BJ (cell line): ENCODE measurements at regions of chr4 and their contacts with region 1.

Region 1: DNA sequence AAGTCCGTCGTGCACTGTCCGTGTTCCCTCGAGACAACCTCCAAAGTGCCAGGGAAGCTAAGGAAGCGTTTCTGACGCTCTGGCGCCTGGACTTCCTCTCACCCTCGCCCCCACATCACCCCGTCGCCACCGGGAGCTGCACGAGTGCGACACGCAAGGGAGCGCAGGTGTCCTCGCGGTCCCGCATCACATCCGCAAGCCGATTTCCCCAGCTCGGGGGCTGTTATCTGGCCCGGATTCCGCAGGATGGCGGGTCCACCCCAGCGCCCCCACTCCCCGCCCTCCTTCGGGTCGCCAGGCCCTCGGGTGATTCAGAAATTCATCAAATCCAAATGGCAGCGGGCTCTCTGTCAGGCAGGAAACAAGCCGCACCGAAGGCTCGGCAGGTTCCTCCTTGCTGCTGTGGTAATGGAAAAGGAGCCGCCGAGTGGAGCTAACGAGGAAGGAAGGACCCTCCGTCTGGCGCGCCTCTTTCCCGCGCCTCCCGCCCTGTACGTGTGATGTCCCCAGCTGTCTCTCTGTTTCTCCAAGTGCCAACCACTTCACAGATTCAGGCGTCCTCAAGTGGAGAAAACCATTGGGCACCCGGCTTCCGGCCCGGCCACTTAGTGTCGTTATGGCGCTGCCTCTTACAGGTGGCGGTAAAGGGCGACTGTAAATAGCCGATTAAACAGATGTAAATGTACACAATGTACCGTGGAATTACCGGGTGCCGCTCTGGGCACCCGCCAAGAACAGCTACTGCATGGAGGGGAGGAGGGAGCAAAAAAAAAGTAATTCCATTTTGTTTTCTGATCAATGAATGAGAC is 932 bp upstream of the SETD7 start:
- DNase-seq: no peak
- H3K4me3 ChIP-seq: peak overlapping the region; percentile 90
- H3K27me3 ChIP-seq: peaks cover 19% of the 10 kb centered on the region
- CTCF ChIP-seq: no peak

Region 2: DNA sequence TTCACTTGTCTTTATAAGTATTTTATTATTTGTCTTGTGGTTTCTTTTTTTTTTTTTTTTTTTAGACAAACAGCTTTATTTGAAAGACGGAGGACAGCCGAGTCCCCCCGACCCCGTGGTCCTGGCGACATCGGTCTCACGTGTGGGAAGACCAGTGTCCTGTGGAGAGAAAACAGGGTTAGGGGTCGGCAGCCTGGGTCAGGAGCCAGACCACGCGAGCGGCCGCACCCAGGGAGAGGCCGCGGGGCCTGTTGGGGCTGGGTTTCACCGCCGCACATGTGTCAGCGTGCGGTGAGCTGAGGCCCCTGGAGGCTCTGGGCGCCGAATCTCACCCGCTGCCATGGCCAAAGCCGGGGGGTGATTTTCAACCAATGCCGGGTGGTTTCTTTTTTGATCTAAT is 120.8 kb before region 1 on chr4:
- CTCF ChIA-PET with region 1: interaction called, 3 read pairs
- POLR2A ChIA-PET with region 1: interaction called, 24 read pairs
- DNase-seq: no peak
- H3K4me3 ChIP-seq: no peak overlapping the region
- H3K27me3 ChIP-seq: no peaks in the 10 kb centered on the region
- CTCF ChIP-seq: no peak

Region 3: DNA sequence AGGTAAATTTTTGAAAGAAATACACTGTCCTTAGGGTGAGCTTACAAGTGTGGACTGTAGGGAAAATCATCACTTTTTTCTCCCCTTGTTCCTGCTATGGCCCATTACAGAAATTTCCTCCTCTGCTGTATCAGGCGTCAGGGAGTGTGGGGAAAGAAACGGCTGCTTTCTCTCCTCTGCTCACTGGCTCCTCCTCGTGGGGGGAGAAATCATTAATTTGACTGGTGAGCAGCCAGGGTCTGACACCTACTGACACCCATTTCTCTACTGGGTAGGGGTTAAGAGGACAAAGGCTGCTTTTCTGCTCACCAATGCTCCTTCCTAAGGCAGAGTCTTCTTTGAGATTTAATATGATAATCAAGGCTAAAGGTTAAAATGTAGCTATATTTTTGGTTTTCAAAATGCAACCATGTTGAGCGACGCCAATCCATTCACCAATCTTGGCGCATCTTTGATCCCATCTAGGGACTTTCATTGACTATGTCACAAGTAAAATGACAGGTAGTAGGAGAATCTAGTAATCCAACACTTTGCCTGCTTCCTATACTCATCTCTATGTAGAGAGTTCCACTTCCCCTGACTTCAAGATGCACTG is 26.0 kb before region 1 on chr4:
- CTCF ChIA-PET with region 1: no interaction called
- POLR2A ChIA-PET with region 1: interaction called, 10 read pairs
- DNase-seq: no peak
- H3K4me3 ChIP-seq: no peak overlapping the region
- H3K27me3 ChIP-seq: no peaks in the 10 kb centered on the region
- CTCF ChIP-seq: peak; percentile 58